ENCODE measurements at regions of chr13 and their contacts with region 1.

Region 1: DNA sequence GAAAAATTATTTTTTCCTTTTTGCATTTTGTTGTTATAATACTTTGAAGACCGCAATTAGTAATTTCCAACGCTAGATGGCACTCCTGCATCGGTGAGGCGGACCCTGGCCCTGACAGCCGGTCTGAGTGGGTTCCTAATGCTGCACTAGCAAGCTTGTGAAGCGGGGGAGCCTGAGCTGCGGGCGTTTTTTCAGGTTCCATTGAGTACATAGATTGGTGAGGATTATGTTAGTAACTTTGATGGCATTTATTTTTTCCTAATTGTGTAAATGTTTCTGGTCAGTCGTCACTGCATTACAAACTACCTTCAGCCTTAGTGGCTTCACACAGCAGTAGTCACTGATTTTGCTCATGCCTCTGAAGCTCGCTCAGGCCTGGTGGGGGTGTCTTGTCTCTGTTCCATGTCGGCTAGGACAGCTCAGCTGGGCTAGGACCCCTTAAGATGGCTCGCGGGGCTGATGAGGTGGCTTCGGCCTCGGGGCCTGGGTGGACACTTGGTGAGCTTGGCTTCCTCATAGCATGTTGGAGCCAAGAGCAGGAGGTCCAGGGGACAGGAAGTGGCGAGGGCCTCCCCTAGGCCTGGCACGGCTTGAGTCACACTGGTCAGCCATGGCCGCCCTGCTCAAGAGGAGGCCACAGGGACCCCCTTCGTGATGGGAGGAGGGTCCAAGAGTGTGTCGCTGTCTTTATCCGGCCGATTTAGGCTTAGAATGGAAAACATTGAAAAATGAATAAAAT is 25.0 kb downstream of the ERCC5 start:
- DNase-seq: peak; percentile 73
- CTCF ChIP-seq: peak; percentile 72

Region 2: DNA sequence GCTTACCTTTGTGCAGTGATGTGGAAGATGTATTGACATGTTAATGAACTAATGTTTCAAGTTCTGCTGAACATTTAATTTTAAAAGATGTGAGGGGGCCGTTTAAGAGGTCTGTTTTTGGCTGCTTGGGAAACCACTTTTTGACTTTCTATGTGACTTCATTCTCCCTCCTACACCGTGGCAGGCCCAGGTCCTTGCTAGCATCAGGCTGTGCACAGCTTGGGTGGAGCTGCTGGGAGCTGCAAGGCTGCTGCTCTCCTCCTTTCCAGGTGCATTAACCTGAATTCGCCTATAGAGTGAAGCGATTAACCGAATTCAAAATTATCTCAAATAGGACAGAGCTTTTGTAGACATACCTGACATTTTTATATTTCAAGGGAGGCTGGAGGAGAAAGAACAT is 718.1 kb before region 1 on chr13:
- CTCF ChIA-PET with region 1: no interaction called
- POLR2A ChIA-PET with region 1: no interaction called
- DNase-seq: no peak
- CTCF ChIP-seq: no peak

Region 3: DNA sequence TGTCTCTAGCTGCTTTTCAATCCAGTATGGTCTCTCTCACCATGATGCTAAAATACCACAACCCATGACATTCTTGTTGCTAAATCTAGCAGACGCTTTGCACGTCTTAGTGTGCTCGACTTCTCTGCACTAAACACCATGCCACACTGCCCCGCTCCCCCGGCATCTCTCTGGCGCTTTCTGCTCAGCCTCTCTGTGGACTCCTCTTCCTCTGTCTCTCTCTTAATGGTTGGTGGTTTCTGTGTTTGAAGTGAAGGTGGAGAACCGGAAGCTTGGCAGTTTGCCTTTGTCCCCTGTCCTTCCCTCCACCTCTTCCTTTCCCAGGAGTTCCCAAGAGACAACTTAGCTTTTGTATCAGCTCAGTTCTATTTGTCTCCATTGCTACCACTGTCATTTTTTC is 16.2 kb before region 1 on chr13:
- CTCF ChIA-PET with region 1: interaction called, 25 read pairs
- POLR2A ChIA-PET with region 1: no interaction called
- DNase-seq: no peak
- CTCF ChIP-seq: no peak

Region 4: DNA sequence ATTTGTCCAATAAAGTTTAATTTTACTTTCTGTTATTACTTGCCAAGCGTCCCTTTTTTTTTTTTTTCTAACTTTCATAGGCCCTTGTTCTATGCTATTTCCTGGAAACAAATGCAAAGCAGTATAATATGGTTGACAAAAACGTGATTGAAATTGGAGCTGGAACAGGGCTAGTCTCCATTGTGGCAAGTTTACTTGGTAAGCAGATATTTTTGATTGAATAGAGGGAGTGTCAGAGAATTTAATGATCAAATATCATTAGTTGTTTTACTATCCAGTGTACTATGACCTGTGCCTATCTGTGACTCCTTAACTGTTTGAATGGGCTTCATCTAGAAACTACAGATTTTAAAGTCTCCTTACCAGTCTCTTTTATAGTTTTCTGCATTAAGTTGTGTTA is 21.7 kb after region 1 on chr13:
- CTCF ChIA-PET with region 1: interaction called, 16 read pairs
- POLR2A ChIA-PET with region 1: no interaction called
- DNase-seq: no peak
- CTCF ChIP-seq: no peak

Region 5: DNA sequence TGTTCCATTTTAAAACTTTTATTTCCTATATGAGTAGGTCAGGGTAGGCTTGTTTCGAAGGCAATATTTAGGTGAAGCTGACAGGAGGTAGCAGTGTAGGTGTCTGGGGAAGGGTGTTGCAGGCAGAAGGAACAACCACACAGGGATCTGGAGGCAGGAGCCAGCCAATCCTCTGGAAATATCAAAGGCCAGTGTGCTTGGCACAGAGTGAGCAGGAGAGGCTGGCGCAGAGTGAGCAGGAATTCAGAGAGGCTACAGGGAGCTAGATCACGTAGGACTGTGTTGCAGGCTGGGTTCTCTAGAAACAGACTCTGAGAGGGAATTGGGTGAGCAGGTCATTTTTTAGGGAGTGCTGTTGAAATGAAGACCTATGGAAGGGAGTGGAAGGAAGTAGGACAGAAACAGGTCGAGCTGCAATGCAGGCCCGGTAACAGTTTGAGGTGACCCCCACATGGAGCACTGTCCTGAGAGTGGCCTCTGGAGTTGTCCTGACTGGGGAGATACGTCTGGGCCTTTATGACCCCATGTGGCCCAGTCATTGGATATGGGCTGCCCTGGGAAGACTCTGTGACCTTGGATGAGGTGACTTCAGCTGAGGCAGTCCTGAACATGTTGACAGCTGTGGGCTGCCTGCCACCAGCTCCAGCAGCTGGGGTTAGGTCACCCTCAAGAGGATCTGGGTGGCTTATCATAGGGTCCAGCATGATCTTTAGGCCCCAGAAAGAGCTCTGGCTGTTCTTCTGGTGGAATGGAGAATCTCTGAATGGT is 26.7 kb after region 1 on chr13:
- CTCF ChIA-PET with region 1: interaction called, 11 read pairs
- POLR2A ChIA-PET with region 1: no interaction called
- DNase-seq: no peak
- CTCF ChIP-seq: no peak

Region 6: GRCh38 chr13:103328899-103329298 is 458.1 kb after region 1 on chr13:
- CTCF ChIA-PET with region 1: no interaction called
- POLR2A ChIA-PET with region 1: no interaction called
- DNase-seq: no peak
- CTCF ChIP-seq: no peak

Measured in GM10248 (cell line).